ENCODE measurements at regions of chr16 and their contacts with region 1.

Region 1: DNA sequence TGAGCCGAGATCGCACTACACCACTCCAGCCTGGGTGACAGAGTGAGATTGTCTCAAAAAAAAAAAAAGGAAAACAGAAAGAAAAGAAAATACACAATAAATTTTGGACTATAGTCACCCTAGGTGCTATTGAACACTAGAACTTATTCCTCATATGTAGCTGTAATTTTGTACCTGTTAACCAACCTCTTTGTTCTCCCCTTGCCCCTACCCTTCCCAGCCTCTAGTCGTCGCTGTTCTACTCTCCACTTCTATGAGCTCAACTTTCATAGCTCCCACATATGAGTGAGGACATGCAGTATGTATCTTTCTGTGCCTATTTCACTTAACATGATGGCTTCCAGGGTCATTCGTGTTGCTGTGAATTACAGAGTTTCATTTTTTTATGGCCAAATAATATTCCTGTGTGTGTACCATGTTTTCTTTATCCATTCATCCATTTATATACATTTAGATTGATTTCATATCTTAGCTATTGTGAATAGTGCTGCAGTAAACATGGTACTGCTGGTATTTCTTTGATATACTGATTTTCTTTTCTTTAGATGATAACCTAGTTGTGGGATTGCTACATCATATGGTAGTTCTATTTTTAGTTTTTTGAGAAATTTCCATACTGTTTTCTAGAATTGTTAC is 28.3 kb downstream of the VPS35L start:
- DNase-seq: peak; percentile 74
- H3K4me3 Mint-ChIP-seq: no peak overlapping the region
- H3K27ac Mint-ChIP-seq: no peak overlapping the region
- H3K4me1 Mint-ChIP-seq: no peaks in the 10 kb centered on the region
- H3K27me3 Mint-ChIP-seq: no peaks in the 10 kb centered on the region

Region 2: DNA sequence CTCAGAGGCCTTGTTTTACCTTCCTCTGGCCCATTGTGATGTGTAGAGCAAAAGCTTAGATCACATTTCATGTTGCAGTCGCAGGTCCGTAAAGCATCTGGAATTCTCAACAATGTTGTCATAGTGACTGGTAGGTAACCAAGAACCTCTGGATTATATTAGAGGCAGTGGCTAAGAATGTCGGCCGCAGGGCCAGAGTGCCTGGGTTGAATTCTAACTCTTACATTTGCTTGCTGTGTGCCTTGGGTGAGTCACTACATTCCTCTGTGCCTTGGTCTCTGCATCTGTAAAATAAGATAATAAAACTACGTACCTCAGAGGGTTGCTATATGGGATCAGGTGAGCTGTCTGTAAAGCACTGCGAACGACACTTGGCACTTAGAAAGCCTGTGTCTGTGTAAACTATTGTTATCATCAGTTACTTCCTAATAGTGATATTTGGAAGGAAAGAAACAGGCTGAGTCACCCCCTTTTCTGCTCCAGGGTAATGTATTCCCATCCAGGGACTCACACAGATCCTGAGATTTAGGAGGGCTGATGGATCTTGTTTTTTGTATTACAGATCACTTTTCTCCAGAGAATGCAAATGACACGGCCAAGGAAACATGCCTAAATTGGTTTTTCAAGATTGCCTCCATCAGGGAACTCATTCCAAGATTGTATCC is 24.0 kb after region 1 on chr16:
- intact Hi-C with region 1: no loop called
- DNase-seq: no peak
- H3K4me3 Mint-ChIP-seq: no peak overlapping the region
- H3K27ac Mint-ChIP-seq: no peak overlapping the region
- H3K4me1 Mint-ChIP-seq: no peaks in the 10 kb centered on the region
- H3K27me3 Mint-ChIP-seq: no peaks in the 10 kb centered on the region

Region 3: DNA sequence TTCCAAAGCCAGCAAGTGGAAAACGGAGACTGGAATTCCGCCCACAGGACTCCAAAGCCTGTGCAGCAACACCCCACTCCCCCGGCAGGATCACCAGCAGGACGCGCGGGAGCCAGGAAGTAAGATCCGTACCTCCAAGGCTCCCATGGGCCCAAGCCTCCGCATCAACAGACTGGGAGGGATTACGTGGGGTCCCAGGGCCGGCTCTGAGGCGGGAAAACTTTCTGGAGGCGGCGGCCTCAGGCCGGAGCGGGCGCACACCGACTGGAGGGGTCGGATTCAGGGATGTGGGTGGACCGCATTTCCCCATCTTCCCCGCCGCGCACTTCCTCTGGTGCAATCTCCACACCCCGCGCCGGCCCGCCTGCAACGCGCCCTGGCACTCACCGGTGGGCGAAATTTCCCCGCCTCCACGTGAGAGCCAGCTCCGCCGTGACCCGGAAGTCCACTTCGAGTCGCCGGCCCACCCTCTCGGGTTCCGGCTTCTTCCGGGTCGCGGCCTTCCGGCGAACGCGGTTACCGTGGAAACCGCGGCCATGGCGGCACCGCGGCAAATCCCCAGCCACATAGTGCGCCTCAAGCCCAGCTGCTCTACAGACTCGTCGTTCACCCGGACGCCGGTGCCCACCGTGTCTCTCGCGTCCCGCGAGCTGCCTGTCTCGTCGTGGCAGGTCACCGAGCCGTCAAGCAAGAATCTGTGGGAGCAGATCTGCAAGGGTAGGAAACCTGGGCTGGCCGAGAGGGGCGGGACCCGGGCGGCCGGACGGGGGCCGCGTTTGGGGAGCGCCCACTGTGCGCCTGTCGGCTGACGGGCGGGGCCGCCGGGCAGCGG is 134.2 kb after region 1 on chr16 and contains the starts of genes IQCK and KNOP1:
- intact Hi-C with region 1: loop called (anchors 10 kb)
- DNase-seq: peak; percentile 97
- H3K4me3 Mint-ChIP-seq: peak within 1 kb of the TSS; percentile 96
- H3K27ac Mint-ChIP-seq: peak within 1 kb of the TSS; percentile 89
- H3K4me1 Mint-ChIP-seq: peaks cover 18% of the 10 kb centered on the region
- H3K27me3 Mint-ChIP-seq: no peaks in the 10 kb centered on the region
- total RNA-seq, gene IQCK: 1.0 and 2.0 TPM in 2 replicates
- total RNA-seq, gene KNOP1: 36.9 and 37.0 TPM in 2 replicates

Region 4: DNA sequence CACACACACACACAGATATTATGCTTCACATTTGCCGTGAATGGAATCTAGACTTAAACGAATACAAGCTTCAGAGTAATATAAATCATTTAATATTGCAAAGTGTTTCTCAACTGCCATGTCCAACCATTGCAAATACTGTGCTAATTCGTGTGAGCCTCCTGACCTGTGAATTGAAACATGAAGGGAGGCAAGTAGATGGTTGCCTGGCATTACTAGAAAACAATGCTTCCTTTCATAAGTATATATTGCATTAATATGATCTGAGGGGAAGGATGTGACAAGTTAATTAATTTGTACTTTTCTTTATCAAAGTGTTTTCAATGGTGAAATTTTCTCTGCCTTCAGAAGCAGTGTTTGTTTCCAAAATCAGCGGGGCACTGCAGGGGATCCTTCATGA is 515.6 kb after region 1 on chr16:
- intact Hi-C with region 1: loop called (anchors 10 kb)
- DNase-seq: no peak
- H3K4me3 Mint-ChIP-seq: no peak overlapping the region
- H3K27ac Mint-ChIP-seq: no peak overlapping the region
- H3K4me1 Mint-ChIP-seq: no peaks in the 10 kb centered on the region
- H3K27me3 Mint-ChIP-seq: no peaks in the 10 kb centered on the region

Measured in activated CD4-positive, alpha-beta T cell treated with anti-CD3 and anti-CD28 coated beads, Interleukin-2, amount 10 ng/mL, durations not matched to agents 24 days and 14 days (primary cell).